ENCODE measurements at regions of chr3 and their contacts with region 1.

Region 1: GRCh38 chr3:66253790-66254620 is 33.2 kb downstream of the SLC25A26 start:
- DNase-seq: no peak
- ATAC-seq: no peak
- H3K4me3 Mint-ChIP-seq: no peak overlapping the region
- H3K27ac Mint-ChIP-seq: no peak overlapping the region
- H3K4me1 Mint-ChIP-seq: no peaks in the 10 kb centered on the region
- H3K27me3 Mint-ChIP-seq: no peaks in the 10 kb centered on the region

Region 2: DNA sequence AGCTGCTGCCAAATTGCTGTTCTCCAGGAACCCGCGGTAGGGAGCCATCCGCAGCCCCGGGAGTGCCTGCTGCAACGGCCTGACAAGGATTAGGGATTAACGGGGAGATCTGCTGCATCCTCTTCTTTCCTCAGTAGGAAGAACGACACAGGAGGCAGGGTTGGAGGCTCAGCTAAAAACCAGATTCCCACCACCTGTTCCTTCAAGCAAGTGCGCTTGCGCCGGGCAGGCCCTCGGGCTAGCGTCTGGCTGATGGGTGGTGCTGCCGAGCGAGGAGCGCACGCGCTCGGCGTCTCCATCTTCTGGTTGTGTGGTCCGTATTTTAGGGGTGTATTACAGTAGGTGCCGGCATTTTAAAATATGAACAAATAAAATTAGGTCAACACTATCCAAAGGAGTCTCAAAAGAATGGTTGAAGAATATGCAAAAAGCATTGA is 58.6 kb before region 1 on chr3:
- CTCF ChIA-PET with region 1: no interaction called
- POLR2A ChIA-PET with region 1: no interaction called
- DNase-seq: no peak
- ATAC-seq: no peak
- H3K4me3 Mint-ChIP-seq: no peak overlapping the region
- H3K27ac Mint-ChIP-seq: no peak overlapping the region
- H3K4me1 Mint-ChIP-seq: no peaks in the 10 kb centered on the region
- H3K27me3 Mint-ChIP-seq: peaks cover 15% of the 10 kb centered on the region

Region 3: GRCh38 chr3:66220602-66221377 is 33.2 kb before region 1 on chr3 and contains the start of gene SLC25A26:
- CTCF ChIA-PET with region 1: interaction called, 15 read pairs
- POLR2A ChIA-PET with region 1: no interaction called
- DNase-seq: peak; percentile 98
- ATAC-seq: peak; percentile 99
- H3K4me3 Mint-ChIP-seq: peak within 1 kb of the TSS; percentile 94
- H3K27ac Mint-ChIP-seq: peak within 1 kb of the TSS; percentile 93
- H3K4me1 Mint-ChIP-seq: peaks cover 33% of the 10 kb centered on the region
- H3K27me3 Mint-ChIP-seq: no peaks in the 10 kb centered on the region
- total RNA-seq, gene SLC25A26: 14.2 to 14.3 TPM

Region 4: DNA sequence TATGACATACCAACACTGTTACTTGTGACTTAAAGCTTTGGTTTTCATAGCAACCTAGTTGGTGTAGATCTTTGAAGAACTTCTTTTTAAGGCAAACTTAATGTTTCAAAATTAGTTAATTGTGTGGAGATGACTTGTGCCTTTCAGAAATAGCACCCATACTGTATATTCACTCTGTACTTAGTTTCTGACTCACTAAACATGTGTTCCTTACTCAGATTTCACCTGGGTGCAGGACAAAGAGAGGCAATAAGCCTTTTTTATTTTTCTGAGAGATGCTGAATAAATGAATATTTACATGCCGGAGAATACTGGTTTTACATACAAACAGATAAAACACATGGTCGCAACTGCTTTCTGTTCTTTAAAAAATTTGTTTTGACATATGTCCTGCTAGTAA is 11.6 kb after region 1 on chr3:
- CTCF ChIA-PET with region 1: interaction called, 16 read pairs
- POLR2A ChIA-PET with region 1: no interaction called
- DNase-seq: no peak
- ATAC-seq: no peak
- H3K4me3 Mint-ChIP-seq: no peak overlapping the region
- H3K27ac Mint-ChIP-seq: no peak overlapping the region
- H3K4me1 Mint-ChIP-seq: no peaks in the 10 kb centered on the region
- H3K27me3 Mint-ChIP-seq: no peaks in the 10 kb centered on the region

Region 5: GRCh38 chr3:66326340-66326739 is 72.3 kb after region 1 on chr3:
- CTCF ChIA-PET with region 1: no interaction called
- POLR2A ChIA-PET with region 1: no interaction called
- DNase-seq: no peak
- ATAC-seq: no peak
- H3K4me3 Mint-ChIP-seq: no peak overlapping the region
- H3K27ac Mint-ChIP-seq: no peak overlapping the region
- H3K4me1 Mint-ChIP-seq: no peaks in the 10 kb centered on the region
- H3K27me3 Mint-ChIP-seq: no peaks in the 10 kb centered on the region

Region 6: GRCh38 chr3:66378256-66378823 is 124.3 kb after region 1 on chr3:
- CTCF ChIA-PET with region 1: interaction called, 13 read pairs
- POLR2A ChIA-PET with region 1: no interaction called
- DNase-seq: no peak
- ATAC-seq: no peak
- H3K4me3 Mint-ChIP-seq: no peak overlapping the region
- H3K27ac Mint-ChIP-seq: peak overlapping the region; percentile 45
- H3K4me1 Mint-ChIP-seq: peaks cover 9% of the 10 kb centered on the region
- H3K27me3 Mint-ChIP-seq: no peaks in the 10 kb centered on the region

Region 7: GRCh38 chr3:66822186-66823008 is 568.4 kb after region 1 on chr3:
- CTCF ChIA-PET with region 1: interaction called, 41 read pairs
- POLR2A ChIA-PET with region 1: no interaction called
- DNase-seq: peak; percentile 75
- ATAC-seq: peak; percentile 75
- H3K4me3 Mint-ChIP-seq: no peak overlapping the region
- H3K27ac Mint-ChIP-seq: no peak overlapping the region
- H3K4me1 Mint-ChIP-seq: no peaks in the 10 kb centered on the region
- H3K27me3 Mint-ChIP-seq: peaks cover 10% of the 10 kb centered on the region

Measured in activated CD8-positive, alpha-beta T cell treated with anti-CD3 and anti-CD28 coated beads, Interleukin-2, amount 10 ng/mL, durations not matched to agents 7 days and 5 days (primary cell).